Testis (tissue), 5 donors: ENCODE measurements at regions of chr7 and their contacts with region 1.

Region 1: DNA sequence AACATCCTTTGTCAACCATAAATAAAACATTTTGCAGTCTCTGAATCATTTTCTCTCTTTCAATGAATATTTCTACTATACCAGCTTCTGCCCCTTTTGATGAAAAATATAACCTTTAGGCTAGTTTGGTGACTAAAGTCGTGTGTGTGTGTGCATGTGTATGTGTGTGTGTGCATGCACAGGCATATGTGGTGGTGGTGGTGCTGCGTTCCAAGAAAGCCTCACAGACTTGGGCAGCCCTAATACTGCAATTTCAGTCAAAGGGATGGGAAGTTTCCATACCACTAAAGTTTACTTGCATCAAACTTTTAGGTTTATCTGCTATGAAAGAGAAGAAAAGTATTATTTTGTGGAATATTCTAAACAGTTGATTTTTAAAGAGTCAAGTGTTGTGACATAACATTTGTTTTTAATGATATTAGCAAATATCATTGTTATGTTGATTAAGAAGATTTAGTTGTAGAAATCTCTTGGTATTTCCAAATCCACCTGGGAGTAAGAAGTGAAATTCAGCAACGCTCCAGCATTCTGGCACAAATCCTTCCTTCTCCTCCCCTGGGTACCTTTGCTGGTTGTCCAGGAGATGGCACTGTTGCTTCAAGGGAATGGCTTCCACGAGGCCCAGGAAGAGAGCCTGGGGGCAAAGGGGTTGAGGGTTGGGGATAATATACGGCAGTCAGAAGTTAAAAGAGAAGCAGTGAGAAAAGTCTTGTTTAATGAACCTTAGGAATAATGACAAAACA is 41.5 kb downstream of the ASB4 start:
- DNase-seq: peak; percentile 65
- H3K4me3 ChIP-seq: no peak overlapping the region
- H3K27ac ChIP-seq: no peak overlapping the region
- H3K4me1 ChIP-seq: peaks cover 7% of the 10 kb centered on the region
- H3K27me3 ChIP-seq: no peaks in the 10 kb centered on the region
- CTCF ChIP-seq: peak; percentile 73 to 84 (median 75)
- POLR2A ChIP-seq: no peak

Region 2: DNA sequence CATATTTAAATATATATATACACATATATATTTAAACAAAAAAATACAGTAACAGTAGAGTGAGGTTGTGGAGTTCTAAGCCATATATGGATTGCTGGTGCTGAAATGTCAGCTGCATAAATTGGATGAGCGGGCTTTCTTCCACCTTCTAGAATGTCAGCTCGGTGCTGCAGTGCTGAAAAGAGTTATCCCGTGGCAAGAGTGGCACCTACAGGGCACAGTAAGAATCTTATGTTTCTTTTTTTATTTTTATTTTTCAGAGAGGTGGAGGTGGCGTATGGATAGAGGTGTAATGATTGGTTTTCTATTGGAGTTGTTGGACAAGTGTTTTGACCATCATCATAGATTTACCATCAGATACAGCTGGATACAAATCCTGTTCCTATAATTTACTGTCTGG is 158.9 kb after region 1 on chr7:
- intact Hi-C with region 1: loop called (anchors 5 kb)
- DNase-seq: peak; percentile 71
- H3K4me3 ChIP-seq: no peak overlapping the region
- H3K27ac ChIP-seq: no peak overlapping the region
- H3K4me1 ChIP-seq: no peaks in the 10 kb centered on the region
- H3K27me3 ChIP-seq: no peaks in the 10 kb centered on the region
- CTCF ChIP-seq: peak; percentile 29 to 63 (median 54)
- POLR2A ChIP-seq: no peak